Activated CD8-positive, alpha-beta memory T cell treated with anti-CD3 and anti-CD28 coated beads, Interleukin-2, amount 10 ng/mL, durations not matched to agents 7 days and 5 days (primary cell): ENCODE measurements at regions of chr12 and their contacts with region 1.

Region 1: GRCh38 chr12:1583421-1584078 is 10.8 kb downstream of the FBXL14 start:
- DNase-seq: peak; percentile 76
- ATAC-seq: peak; percentile 76
- H3K4me3 Mint-ChIP-seq: no peak overlapping the region
- H3K27ac Mint-ChIP-seq: no peak overlapping the region
- H3K4me1 Mint-ChIP-seq: peaks cover 15% of the 10 kb centered on the region
- H3K27me3 Mint-ChIP-seq: no peaks in the 10 kb centered on the region

Region 2: DNA sequence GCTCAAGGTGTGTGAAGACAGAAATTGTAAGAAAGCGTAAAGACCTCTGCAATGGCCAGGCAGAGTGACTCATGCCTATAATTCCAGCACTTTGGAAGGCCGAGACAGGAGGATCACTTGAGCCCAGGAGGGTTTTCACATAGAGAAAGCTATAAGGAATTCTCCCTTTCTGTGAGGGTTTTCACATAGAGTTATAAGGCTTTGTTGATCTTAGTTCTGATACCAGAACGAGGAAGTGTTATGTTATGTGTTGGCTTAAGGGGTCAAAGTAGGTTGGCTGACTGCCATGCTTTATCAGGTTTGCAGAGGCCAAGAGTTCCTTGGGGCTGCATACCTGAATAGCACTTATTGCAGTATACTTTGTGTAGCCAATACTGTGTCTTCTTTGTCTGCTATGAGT is 453.4 kb before region 1 on chr12:
- CTCF ChIA-PET with region 1: interaction called, 10 read pairs
- DNase-seq: no peak
- ATAC-seq: no peak
- H3K4me3 Mint-ChIP-seq: no peak overlapping the region
- H3K27ac Mint-ChIP-seq: no peak overlapping the region
- H3K4me1 Mint-ChIP-seq: peaks cover 16% of the 10 kb centered on the region
- H3K27me3 Mint-ChIP-seq: no peaks in the 10 kb centered on the region

Region 3: GRCh38 chr12:1533602-1534304 is 49.8 kb before region 1 on chr12:
- CTCF ChIA-PET with region 1: interaction called, 20 read pairs
- DNase-seq: peak; percentile 86
- ATAC-seq: peak; percentile 81
- H3K4me3 Mint-ChIP-seq: peak overlapping the region; percentile 75
- H3K27ac Mint-ChIP-seq: peak overlapping the region; percentile 83
- H3K4me1 Mint-ChIP-seq: peaks cover 40% of the 10 kb centered on the region
- H3K27me3 Mint-ChIP-seq: peaks cover 71% of the 10 kb centered on the region

Region 4: DNA sequence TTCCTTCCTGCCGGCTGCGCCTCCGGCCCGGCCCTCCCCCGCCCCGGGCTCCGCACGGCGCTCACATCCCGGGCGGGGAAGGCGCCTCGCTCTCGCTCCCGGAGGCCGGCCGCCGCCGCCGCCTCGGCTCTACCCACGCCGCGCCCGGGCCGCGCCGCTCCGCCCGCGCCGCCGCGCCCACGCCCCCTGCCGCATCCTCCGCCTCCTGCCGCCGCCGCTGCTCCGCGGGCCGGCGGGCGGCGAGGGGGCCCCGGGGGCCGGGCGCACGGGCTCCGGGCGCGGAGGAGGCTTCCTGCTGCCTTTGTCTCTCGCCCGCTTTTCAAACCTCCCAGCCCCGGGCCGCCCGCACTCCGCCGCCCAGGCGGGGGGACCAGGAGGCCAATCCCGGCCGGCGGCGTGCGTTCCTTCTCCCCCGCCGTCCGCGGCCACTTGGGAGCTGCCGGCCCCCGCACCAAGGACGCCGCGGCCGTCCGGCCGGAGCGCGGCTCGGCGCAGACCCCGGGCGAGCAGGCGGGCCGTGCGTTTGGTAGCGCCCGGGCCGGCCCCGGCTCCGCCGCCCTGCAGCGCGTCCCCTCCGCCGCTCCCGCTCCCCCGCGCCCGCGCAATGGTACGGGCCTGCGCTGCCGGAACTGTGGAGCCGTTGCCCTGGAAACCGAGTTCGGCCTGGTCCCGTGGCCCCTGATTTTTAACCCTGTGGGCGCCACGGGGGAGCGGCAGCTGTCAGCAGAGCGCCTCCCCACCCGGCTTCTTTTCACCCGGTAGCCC is 10.9 kb after region 1 on chr12 and contains the start of gene FBXL14:
- CTCF ChIA-PET with region 1: interaction called, 24 read pairs
- DNase-seq: peak; percentile 93
- ATAC-seq: peak; percentile 69
- H3K4me3 Mint-ChIP-seq: peak within 1 kb of the TSS; percentile 87
- H3K27ac Mint-ChIP-seq: peak within 1 kb of the TSS; percentile 92
- H3K4me1 Mint-ChIP-seq: peaks cover 38% of the 10 kb centered on the region
- H3K27me3 Mint-ChIP-seq: no peaks in the 10 kb centered on the region
- total RNA-seq, gene FBXL14: 28.2 to 33.4 TPM

Region 5: DNA sequence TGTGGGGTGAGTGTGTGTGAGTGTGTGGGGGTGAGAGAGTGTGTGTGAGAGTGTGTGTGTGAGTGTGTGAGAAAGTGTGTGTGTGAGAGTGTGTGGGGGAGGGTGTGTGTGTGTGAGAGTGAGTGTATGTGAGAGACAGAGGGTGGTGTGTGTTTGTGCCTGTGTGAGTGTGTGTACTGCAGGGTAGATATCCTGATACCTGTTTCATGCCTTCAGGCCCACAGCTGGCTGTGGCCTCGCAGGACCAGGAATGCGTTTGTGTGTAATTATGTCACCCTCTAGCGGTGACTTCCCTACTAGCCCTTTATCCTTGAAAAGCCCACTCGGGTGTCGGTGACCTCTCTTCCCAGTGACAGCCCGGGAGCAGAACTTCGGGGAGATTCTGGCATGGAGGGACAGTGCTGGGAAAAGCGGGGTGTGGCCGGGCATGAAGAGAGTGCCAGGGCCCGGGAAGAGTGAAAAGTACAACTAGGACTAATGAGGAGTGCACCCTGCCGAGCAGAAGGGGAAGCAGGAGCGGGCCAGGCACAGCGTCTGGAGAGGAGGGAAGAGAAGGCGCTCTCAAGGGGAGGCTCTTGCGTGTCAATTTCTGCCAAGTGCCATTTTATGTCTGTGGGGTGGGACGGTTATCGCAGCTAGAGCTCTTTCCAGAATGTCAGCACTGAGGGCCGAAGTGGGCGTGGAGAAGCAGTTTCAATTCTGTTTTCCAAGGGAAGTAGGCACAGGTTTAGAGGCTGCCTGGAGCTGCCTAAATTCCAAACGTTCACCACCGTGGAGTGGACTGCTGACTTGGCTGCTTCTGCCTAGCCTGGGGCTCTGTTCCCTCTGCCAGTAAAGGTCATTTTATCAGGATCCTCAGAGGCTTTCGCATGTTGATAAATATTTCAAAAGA is 21.8 kb after region 1 on chr12:
- CTCF ChIA-PET with region 1: interaction called, 27 read pairs
- DNase-seq: peak; percentile 72
- ATAC-seq: peak; percentile 60
- H3K4me3 Mint-ChIP-seq: peak overlapping the region; percentile 65
- H3K27ac Mint-ChIP-seq: no peak overlapping the region
- H3K4me1 Mint-ChIP-seq: peaks cover 39% of the 10 kb centered on the region
- H3K27me3 Mint-ChIP-seq: peaks cover 4% of the 10 kb centered on the region

Region 6: GRCh38 chr12:1830981-1831963 is 247.7 kb after region 1 on chr12:
- CTCF ChIA-PET with region 1: no interaction called
- DNase-seq: no peak
- ATAC-seq: no peak
- H3K4me3 Mint-ChIP-seq: no peak overlapping the region
- H3K27ac Mint-ChIP-seq: no peak overlapping the region
- H3K4me1 Mint-ChIP-seq: no peaks in the 10 kb centered on the region
- H3K27me3 Mint-ChIP-seq: peaks cover 26% of the 10 kb centered on the region